Ovary (tissue), 10 donors: ENCODE measurements at regions of chr18 and their contacts with region 1.

Region 1: DNA sequence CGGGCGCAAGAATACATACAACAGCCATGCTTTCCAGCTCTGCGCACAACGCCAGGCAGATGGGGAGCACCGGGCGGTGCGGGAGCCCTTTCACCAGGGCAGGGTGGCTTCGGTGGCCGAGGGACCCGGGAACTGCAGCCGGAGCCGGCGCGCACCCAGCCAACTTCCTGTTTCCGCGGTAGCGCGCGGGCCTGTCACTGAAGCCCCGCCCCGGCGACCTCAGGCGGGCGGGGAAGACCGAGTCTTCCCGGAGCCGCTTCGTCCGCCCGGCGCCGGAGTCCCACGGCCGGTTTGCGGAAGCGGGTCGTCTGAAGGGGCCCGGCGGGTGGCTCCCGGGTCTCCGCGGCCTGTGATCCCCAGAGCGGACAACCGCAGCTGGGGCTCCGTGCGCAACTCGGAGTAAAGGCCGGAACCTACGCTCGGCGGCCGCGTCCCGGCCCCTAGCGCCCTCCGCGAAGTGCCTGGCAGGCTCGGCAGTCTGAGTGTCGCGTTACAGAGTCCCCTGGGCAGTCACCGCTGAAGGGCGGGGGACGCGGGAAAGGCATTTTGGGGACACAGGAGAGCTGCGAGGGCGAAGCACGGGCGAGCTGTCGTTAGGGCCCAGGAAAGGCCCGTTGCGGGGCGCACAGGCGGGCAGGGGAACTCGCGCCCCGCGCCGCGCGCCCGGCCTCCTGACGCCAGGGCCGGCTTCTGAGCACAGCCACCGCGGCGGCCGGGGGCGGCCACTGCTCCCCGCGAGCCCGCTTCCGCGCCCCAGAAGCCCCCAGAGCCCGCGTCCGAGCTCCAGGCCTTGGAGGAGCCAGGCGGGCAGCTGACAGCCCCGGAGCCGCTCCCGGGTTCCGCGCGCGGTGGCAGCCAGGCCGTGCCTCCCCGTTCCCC is at the start of gene MPPE1:
- DNase-seq: peak; percentile 82 to 90 (median 86)
- H3K4me3 ChIP-seq: peak within 1 kb of the TSS; percentile 68
- H3K27ac ChIP-seq: peak within 1 kb of the TSS; percentile 98 to 100
- H3K4me1 ChIP-seq: peaks cover 5% of the 10 kb centered on the region
- H3K27me3 ChIP-seq: no peaks in the 10 kb centered on the region
- CTCF ChIP-seq: no peak
- EP300 ChIP-seq: no peak
- POLR2A ChIP-seq: peak; percentile 89
- total RNA-seq, gene MPPE1: 19.9 to 38.0 (median 25.5) TPM

Region 2: DNA sequence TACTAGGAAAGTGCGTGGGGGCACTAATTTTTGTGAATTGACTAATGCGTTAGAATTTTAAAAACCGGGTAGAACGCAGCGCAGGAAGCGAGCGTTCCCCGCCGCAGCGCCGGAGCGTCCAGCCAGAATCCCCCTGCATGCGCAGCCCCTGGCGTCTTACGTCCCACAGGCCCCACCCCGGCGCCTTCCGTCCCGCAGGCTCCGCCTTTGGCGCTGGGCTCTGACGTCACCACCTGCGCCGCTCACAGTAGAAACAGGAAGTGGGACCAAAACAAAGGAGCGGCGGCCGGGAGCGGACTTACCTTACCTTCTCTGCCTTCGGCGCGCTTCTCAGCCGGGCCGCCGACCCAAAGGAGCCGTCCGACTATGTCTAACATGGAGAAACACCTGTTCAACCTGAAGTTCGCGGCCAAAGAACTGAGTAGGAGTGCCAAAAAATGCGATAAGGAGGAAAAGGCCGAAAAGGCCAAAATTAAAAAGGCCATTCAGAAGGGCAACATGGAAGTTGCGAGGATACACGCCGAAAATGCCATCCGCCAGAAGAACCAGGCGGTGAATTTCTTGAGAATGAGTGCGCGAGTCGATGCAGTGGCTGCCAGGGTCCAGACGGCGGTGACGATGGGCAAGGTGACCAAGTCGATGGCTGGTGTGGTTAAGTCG is 57.1 kb before region 1 on chr18 and contains the start of gene CHMP1B:
- intact Hi-C with region 1: loop called in 1 of 4 experiments (anchors 2 kb)
- DNase-seq: peak; percentile 98 to 99 (median 98)
- H3K4me3 ChIP-seq: peak within 1 kb of the TSS; percentile 53
- H3K27ac ChIP-seq: peak within 1 kb of the TSS; percentile 4 to 86
- H3K4me1 ChIP-seq: peaks cover 2% of the 10 kb centered on the region
- H3K27me3 ChIP-seq: no peaks in the 10 kb centered on the region
- CTCF ChIP-seq: peak in 1 of 3 donors; percentile 29
- EP300 ChIP-seq: no peak
- POLR2A ChIP-seq: peak; percentile 95
- total RNA-seq, gene CHMP1B: 21.8 to 58.0 (median 33.0) TPM

Region 3: DNA sequence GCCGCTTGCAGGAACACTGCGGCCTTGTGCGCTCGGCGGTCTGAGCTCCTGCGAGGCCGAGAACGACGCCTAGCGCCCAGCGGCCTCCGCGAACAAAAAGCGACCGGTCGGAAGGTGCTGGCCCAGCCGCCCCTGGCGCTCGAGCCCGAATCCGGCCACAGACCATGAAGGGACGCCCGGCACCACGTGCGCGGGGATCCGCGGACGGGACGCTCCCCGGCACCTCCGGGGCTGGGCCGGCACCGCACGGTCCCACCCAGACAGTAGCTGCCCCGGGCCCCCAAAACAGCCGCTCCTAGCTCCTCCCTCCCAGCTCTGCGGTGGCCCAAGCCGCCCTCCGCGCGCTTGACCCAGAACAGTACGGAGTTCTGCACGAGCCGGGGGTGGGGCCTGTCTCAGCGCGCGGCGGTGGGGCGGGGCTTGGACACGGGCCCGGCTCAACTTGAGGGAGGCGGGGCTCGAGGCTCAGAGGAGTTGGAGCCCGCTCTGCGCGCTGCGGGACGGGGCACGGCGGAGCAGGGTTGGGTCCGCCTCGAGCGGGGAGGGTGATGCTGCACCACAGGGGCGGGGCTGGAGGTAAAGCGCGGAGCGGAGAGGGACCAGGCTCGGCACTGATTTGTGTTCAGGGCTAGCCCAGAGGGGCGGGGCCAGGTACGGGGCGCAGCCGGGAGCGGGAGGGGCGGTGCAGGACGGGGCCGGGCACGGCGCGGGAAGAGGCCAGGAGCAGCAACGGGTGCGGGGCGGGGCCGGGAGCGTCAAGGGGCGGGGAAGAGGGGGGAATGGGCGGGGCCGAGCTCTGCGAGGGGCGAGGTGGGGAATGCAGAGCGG is 72.3 kb after region 1 on chr18:
- intact Hi-C with region 1: loop called in 1 of 4 experiments (anchors 2 kb)
- DNase-seq: peak; percentile 97 to 99 (median 98)
- H3K4me3 ChIP-seq: peak overlapping the region; percentile 92
- H3K27ac ChIP-seq: peak overlapping the region; percentile 72 to 99
- H3K4me1 ChIP-seq: no peaks in the 10 kb centered on the region
- H3K27me3 ChIP-seq: no peaks in the 10 kb centered on the region
- CTCF ChIP-seq: peak in 2 of 3 donors; percentile 29 to 34
- EP300 ChIP-seq: no peak
- POLR2A ChIP-seq: peak; percentile 83

Region 4: GRCh38 chr18:12597775-12598174 is 689.4 kb after region 1 on chr18:
- intact Hi-C with region 1: no loop called
- DNase-seq: peak in 1 of 5 donors; percentile 44
- H3K4me3 ChIP-seq: no peak overlapping the region
- H3K27ac ChIP-seq: no peak overlapping the region
- H3K4me1 ChIP-seq: peaks cover 6% of the 10 kb centered on the region
- H3K27me3 ChIP-seq: no peaks in the 10 kb centered on the region
- CTCF ChIP-seq: no peak
- EP300 ChIP-seq: no peak
- POLR2A ChIP-seq: no peak